Dendritic cell treated with granulocyte-macrophage colony-stimulating factor and Interleukin-4, amounts not matched to agents 40 ng/mL and 50 ng/mL, for 4 days (primary cell): ENCODE measurements at regions of chr17 and their contacts with region 1.

Region 1: GRCh38 chr17:1908699-1909309 is 79.0 kb downstream of the RPA1 start:
- H3K4me3 Mint-ChIP-seq: no peak overlapping the region
- H3K27ac Mint-ChIP-seq: no peak overlapping the region
- H3K4me1 Mint-ChIP-seq: peaks cover 8% of the 10 kb centered on the region
- H3K27me3 Mint-ChIP-seq: peaks cover 92% of the 10 kb centered on the region

Region 2: GRCh38 chr17:2025622-2026310 is 117.0 kb after region 1 on chr17:
- intact Hi-C with region 1: loop called (anchors 1 kb)
- H3K4me3 Mint-ChIP-seq: peak overlapping the region; percentile 71
- H3K27ac Mint-ChIP-seq: no peak overlapping the region
- H3K4me1 Mint-ChIP-seq: peaks cover 46% of the 10 kb centered on the region
- H3K27me3 Mint-ChIP-seq: peaks cover 87% of the 10 kb centered on the region